ENCODE measurements at regions of chr5 and their contacts with region 1.

Region 1: GRCh38 chr5:95870105-95870672 is 47.7 kb upstream of the GLRX start:
- DNase-seq: peak; percentile 82
- ATAC-seq: peak; percentile 82
- H3K4me3 Mint-ChIP-seq: peak overlapping the region; percentile 65
- H3K27ac Mint-ChIP-seq: peak overlapping the region; percentile 100
- H3K4me1 Mint-ChIP-seq: peaks cover 52% of the 10 kb centered on the region
- H3K27me3 Mint-ChIP-seq: no peaks in the 10 kb centered on the region
- CTCF ChIP-seq: no peak

Region 2: DNA sequence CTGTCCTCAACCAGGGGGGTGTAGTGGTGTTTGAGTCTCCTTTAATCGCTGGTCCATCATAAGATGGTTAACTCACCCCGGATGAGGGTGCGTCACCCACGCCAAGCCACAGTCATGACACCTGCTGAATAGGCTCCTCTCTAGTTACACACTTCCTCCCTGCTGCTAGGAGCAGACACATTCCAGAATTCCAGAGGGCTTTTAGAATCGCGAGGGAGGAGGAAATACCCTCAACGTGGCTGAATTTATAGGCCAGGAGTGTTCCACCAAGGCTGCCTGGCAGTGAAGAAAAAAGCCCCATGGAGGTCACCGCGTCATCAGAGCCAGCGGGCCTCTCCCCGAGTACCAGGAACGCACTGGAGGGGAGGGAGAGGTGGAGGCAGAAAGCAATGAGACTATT is 52.7 kb before region 1 on chr5:
- CTCF ChIA-PET with region 1: no interaction called
- POLR2A ChIA-PET with region 1: no interaction called
- intact Hi-C with region 1: no loop called
- DNase-seq: peak; percentile 66
- ATAC-seq: peak; percentile 37
- H3K4me3 Mint-ChIP-seq: peak overlapping the region; percentile 76
- H3K27ac Mint-ChIP-seq: peak overlapping the region; percentile 93
- H3K4me1 Mint-ChIP-seq: peaks cover 59% of the 10 kb centered on the region
- H3K27me3 Mint-ChIP-seq: no peaks in the 10 kb centered on the region
- CTCF ChIP-seq: no peak

Region 3: GRCh38 chr5:95858661-95859326 is 11.4 kb before region 1 on chr5:
- CTCF ChIA-PET with region 1: interaction called, 21 read pairs
- POLR2A ChIA-PET with region 1: interaction called, 15 read pairs
- intact Hi-C with region 1: loop called (anchors 1 kb)
- DNase-seq: peak; percentile 97
- ATAC-seq: peak; percentile 97
- H3K4me3 Mint-ChIP-seq: peak overlapping the region; percentile 31
- H3K27ac Mint-ChIP-seq: peak overlapping the region; percentile 66
- H3K4me1 Mint-ChIP-seq: peaks cover 45% of the 10 kb centered on the region
- H3K27me3 Mint-ChIP-seq: no peaks in the 10 kb centered on the region
- CTCF ChIP-seq: peak; percentile 92

Region 4: DNA sequence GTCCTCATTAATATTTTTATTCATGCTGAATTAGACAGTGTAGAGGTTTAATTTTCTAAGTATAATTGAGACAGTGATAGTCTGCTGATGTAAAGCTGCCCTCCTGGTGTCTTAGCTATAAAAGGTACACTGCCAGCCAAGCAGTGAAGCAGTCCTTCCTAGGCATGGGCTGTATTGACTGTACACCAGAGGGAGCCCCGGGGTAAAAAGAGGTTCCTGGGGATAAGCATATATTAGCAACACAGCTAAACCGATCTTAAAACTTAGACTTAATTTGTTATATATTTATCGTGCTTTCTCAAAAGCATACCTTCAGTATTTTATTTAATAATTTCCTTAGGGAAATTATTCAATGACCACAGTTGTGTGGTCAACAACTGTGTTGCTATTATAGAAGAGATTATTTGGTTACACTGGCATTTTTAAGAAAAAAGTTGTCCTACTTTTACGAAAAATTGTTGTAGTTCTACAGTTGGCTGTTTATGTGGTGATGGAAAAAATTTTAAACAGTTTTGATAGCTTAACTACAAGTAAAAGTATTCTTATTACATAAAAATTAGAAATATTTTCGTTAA is 22.7 kb after region 1 on chr5:
- CTCF ChIA-PET with region 1: no interaction called
- POLR2A ChIA-PET with region 1: no interaction called
- intact Hi-C with region 1: no loop called
- DNase-seq: peak; percentile 53
- ATAC-seq: no peak
- H3K4me3 Mint-ChIP-seq: no peak overlapping the region
- H3K27ac Mint-ChIP-seq: no peak overlapping the region
- H3K4me1 Mint-ChIP-seq: peaks cover 3% of the 10 kb centered on the region
- H3K27me3 Mint-ChIP-seq: no peaks in the 10 kb centered on the region
- CTCF ChIP-seq: peak; percentile 38

Region 5: GRCh38 chr5:95927927-95928723 is 57.9 kb after region 1 on chr5:
- CTCF ChIA-PET with region 1: no interaction called
- POLR2A ChIA-PET with region 1: no interaction called
- intact Hi-C with region 1: loop called (anchors 5 kb)
- DNase-seq: no peak
- ATAC-seq: peak; percentile 80
- H3K4me3 Mint-ChIP-seq: no peak overlapping the region
- H3K27ac Mint-ChIP-seq: peak overlapping the region; percentile 65
- H3K4me1 Mint-ChIP-seq: peaks cover 20% of the 10 kb centered on the region
- H3K27me3 Mint-ChIP-seq: no peaks in the 10 kb centered on the region
- CTCF ChIP-seq: no peak

Region 6: DNA sequence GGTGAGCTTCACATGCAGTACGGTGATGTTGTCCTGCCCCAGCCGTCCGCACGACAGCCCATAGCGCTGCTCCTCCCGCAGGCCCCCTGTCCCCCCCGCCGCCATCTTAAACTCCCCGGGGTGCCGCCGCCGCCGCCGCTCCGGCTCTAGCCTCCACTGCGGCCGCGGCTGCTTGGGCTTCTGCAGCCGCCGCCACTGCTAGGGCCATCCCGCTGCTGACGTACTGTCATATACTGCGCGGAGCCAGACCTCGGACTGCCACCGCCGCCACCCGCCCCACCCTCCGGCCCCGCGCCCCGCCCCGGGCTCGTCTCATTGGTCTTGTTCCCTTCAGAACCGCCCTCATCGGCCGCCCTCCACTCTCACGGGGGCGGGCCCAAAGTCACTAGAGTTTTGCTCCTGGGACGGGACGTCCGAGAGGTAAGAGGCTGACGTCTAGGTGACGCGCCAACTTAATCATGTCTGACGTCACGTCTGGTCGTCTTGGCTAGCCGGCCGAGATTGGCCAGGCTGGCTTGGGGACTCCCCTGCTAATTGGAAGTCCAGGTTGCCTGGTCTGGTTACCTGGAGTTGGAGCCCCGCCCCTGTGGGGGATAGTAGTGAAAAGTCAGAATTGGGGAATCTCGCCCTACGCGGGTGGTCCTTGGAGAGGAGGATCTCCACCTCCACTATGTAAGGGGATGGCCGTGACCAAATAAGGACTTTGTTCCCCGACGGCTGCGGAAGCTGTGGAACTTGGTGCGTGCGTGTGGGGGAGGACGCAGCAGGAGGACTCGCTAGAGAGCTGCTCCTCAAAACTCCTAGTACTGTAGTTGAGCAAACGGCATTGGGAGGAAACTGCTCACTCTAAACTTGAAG is 91.7 kb after region 1 on chr5 and contains the start of gene ELL2:
- CTCF ChIA-PET with region 1: interaction called, 15 read pairs
- POLR2A ChIA-PET with region 1: interaction called, 3 read pairs
- intact Hi-C with region 1: loop called (anchors 5 kb)
- DNase-seq: peak; percentile 99
- ATAC-seq: peak; percentile 91
- H3K4me3 Mint-ChIP-seq: peak within 1 kb of the TSS; percentile 95
- H3K27ac Mint-ChIP-seq: peak within 1 kb of the TSS; percentile 98
- H3K4me1 Mint-ChIP-seq: peaks cover 47% of the 10 kb centered on the region
- H3K27me3 Mint-ChIP-seq: no peaks in the 10 kb centered on the region
- CTCF ChIP-seq: no peak
- total RNA-seq, gene ELL2: 39.7 to 46.3 TPM

Region 7: DNA sequence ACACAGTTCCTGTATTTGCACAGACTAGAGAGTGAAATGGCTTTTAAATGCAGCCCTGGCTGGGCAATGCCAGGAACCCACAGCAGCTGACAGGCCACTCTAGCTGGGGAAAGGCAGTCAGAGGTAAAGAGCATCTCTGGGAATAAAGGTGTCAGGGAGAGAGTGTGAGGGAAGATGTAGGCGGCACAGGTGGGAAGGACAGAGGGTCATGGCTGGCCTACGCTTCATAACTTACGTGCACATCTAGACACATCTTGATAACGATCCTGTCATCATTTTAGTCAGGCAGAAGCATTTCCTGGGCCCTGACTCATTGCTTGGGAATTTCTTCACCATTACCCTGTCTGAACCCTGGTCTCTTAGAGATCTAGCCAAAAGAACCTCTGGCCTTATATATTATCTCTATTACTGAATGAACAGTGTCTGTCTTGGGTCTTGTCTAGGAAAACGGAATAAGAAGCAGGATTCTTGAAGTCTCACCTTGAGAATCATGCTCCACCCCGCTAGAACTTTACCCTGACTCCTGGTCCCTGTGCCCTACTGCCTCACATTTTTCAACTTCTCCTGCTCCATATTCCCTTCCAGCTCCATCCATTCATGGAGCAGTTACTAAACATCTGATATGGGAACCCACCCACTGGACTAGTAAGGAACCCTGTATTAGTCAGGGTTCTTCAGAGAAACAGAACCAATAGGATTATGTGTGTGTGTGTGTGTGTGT is 197.9 kb after region 1 on chr5:
- CTCF ChIA-PET with region 1: no interaction called
- POLR2A ChIA-PET with region 1: interaction called, 6 read pairs
- intact Hi-C with region 1: loop called (anchors 5 kb)
- DNase-seq: peak; percentile 20
- ATAC-seq: peak; percentile 18
- H3K4me3 Mint-ChIP-seq: no peak overlapping the region
- H3K27ac Mint-ChIP-seq: no peak overlapping the region
- H3K4me1 Mint-ChIP-seq: peaks cover 54% of the 10 kb centered on the region
- H3K27me3 Mint-ChIP-seq: no peaks in the 10 kb centered on the region
- CTCF ChIP-seq: no peak